Activated CD4-positive, alpha-beta T cell treated with anti-CD3 and anti-CD28 coated beads for 36 hours (primary cell): ENCODE measurements at regions of chr20 and their contacts with region 1.

Region 1: DNA sequence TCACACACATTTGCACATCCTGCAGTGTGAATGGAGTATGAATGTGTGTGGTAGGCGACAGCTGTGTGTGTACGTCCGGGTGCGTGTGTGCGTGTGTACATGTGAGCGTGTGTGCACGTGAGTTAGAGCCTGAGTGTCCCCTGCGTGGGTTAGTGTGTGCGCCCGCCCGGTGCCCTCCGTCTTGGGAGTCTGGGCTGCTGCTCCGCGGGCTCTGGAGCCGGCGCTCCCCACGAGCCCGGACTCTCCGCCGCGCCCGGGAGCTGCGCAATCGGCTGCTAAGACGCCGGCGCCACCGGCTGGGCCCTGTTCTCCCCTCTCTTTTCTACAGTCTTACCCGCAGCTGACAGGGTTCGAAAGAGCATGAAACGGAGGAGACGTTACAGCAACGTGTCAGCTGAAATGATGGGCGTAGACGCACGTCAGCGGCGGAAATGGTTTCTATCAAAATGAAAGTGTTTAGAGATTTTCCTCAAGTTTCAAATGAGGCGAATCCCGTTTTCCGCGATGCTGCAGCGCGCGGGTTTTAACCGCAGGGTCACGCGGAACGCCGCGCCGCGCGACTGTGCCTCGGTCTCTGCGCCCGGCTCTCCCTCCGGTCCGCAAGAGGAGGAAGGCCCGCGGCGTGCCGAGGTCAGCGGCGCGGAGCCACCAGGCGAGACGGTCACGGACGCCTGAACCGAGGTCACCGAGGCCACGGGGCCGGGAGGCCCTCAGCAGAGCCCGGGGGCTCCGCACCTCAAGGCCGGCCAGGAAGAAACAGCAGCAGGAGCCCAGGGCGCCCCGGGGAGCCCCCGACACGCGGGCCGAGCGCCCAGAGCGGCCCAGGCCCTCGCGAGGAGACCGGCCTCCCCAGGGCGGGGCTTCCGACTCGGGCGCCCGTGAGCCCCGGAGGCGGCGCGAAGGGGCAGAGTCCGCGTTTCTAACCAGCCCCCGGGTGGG is 95.3 kb upstream of the BHLHE23 start:
- DNase-seq: peak; percentile 85
- ATAC-seq: peak; percentile 74
- H3K4me3 Mint-ChIP-seq: peak overlapping the region; percentile 77
- H3K27ac Mint-ChIP-seq: peak overlapping the region; percentile 87
- H3K4me1 Mint-ChIP-seq: peaks cover 5% of the 10 kb centered on the region
- H3K27me3 Mint-ChIP-seq: no peaks in the 10 kb centered on the region

Region 2: DNA sequence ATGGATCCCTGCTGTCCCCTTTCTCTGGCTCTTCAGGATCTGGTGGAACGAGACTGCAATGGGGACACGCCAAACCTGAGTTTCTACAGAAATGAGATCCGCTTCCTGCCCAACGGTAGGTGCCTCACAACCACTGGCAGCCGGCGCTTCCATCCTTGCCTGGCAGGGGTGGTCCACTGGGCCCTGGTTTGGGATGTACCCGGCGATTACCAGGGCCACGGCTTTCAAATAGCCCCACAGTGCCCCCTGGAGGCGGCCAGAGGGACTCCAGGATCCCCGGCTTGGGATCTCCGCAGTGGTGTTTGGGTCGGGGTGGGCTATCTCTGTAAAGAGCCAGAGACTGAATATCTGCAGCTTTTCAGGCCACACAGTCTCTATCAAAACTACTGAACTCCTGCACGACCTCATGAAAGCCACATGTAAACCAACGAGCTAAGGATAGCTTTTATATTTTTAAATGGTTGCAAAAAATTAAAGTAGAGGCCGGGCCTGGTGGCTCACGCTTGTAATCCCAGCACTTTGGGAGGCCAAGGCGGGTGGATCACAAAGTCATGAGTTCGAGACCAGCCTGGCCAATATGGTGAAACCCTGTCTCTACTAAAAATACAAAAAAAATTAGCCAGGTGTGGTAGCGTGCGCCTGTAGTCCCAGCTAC is 293.7 kb before region 1 on chr20:
- CTCF ChIA-PET with region 1: no interaction called
- POLR2A ChIA-PET with region 1: no interaction called
- intact Hi-C with region 1: no loop called
- DNase-seq: peak; percentile 86
- ATAC-seq: peak; percentile 67
- H3K4me3 Mint-ChIP-seq: no peak overlapping the region
- H3K27ac Mint-ChIP-seq: no peak overlapping the region
- H3K4me1 Mint-ChIP-seq: peaks cover 21% of the 10 kb centered on the region
- H3K27me3 Mint-ChIP-seq: no peaks in the 10 kb centered on the region

Region 3: DNA sequence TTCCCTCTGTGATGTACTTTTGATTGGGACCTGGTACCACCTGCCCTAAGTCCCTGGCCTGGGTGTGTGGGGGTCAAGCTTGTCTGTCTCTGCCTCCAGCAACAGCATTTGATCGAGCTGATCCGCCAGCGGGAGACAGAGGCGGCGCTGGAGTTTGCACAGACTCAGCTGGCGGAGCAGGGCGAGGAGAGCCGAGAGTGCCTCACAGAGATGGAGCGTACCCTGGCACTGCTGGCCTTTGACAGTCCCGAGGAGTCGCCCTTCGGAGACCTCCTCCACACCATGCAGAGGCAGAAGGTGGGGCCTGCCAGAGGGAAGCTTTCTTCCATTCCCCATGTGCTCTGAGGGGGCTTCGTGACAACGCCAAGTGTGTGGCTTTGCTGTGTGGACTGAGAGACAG is 158.7 kb before region 1 on chr20:
- CTCF ChIA-PET with region 1: no interaction called
- POLR2A ChIA-PET with region 1: no interaction called
- intact Hi-C with region 1: no loop called
- DNase-seq: no peak
- ATAC-seq: no peak
- H3K4me3 Mint-ChIP-seq: no peak overlapping the region
- H3K27ac Mint-ChIP-seq: no peak overlapping the region
- H3K4me1 Mint-ChIP-seq: peaks cover 31% of the 10 kb centered on the region
- H3K27me3 Mint-ChIP-seq: no peaks in the 10 kb centered on the region

Region 4: DNA sequence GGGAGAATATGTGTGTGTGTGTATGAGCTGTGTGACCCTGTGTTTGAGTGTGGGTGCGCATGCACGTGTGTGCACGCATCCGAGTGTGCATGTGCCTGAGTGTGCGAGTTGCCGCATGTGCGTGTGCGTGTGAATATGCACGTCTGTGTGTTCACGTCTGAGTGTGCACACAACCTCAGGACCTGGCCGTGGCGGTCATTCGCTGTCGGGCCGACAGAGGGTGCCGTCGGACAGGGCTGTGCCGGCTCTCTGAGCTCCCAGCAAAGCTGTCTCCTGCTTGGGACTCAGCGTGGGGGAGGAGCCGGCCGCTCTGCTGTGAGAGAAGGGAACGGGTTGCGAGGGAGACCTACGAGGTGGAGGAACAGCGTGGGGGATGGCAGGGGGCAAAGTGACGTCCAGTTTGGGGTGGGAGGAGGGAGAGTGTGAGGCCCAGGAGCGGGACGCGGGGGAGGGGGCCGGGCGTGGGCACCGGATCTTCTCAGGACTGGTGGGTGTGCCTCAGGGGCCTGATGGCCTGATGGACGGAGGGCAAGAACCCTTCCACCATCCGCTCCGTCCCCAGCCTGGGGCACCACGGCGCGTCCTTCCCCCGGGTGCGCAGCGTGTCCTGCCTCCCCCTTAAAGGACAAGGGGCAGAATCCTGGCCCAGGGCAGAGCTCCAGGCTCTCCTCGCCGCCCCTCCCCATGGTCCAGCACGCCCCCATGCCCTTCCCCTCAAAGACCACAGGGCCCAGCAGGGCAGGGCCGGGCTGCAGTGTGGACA is 129.6 kb before region 1 on chr20:
- CTCF ChIA-PET with region 1: interaction called, 3 read pairs
- POLR2A ChIA-PET with region 1: no interaction called
- intact Hi-C with region 1: loop called in 1 of 2 experiments (anchors 1 kb)
- DNase-seq: peak; percentile 93
- ATAC-seq: peak; percentile 99
- H3K4me3 Mint-ChIP-seq: peak overlapping the region; percentile 4
- H3K27ac Mint-ChIP-seq: no peak overlapping the region
- H3K4me1 Mint-ChIP-seq: peaks cover 19% of the 10 kb centered on the region
- H3K27me3 Mint-ChIP-seq: peaks cover 37% of the 10 kb centered on the region

Region 5: GRCh38 chr20:63056236-63056948 is 45.7 kb before region 1 on chr20:
- CTCF ChIA-PET with region 1: interaction called, 3 read pairs
- POLR2A ChIA-PET with region 1: no interaction called
- intact Hi-C with region 1: loop called in 1 of 2 experiments (anchors 2 kb)
- DNase-seq: peak; percentile 71
- ATAC-seq: peak; percentile 71
- H3K4me3 Mint-ChIP-seq: no peak overlapping the region
- H3K27ac Mint-ChIP-seq: no peak overlapping the region
- H3K4me1 Mint-ChIP-seq: no peaks in the 10 kb centered on the region
- H3K27me3 Mint-ChIP-seq: peaks cover 16% of the 10 kb centered on the region

Region 6: DNA sequence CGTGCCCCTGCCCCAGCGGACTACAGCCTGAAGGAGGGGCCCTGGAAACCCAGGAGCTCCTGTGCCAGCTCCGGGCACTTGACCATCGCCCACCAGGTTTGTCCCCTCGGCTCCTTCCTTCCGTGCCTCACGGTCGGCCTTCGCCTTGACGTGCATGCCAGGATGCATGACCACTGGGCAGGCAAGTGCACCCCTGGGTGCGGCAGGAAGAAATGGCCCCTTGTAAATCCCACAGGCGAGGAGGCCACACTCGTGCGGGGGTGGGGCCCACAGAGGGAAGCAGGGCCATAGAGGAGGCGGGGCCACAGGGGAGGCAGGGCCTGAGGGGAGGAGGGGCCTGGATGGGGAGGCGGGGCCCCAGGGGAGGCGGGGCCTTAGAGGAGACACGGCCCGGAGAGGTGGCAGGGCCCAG is 32.2 kb after region 1 on chr20:
- CTCF ChIA-PET with region 1: no interaction called
- POLR2A ChIA-PET with region 1: no interaction called
- intact Hi-C with region 1: loop called in 1 of 2 experiments (anchors 2 kb)
- DNase-seq: peak; percentile 50
- ATAC-seq: peak; percentile 18
- H3K4me3 Mint-ChIP-seq: no peak overlapping the region
- H3K27ac Mint-ChIP-seq: no peak overlapping the region
- H3K4me1 Mint-ChIP-seq: no peaks in the 10 kb centered on the region
- H3K27me3 Mint-ChIP-seq: peaks cover 12% of the 10 kb centered on the region

Region 7: GRCh38 chr20:63216041-63216848 is 114.2 kb after region 1 on chr20 and contains the start of gene YTHDF1:
- CTCF ChIA-PET with region 1: no interaction called
- POLR2A ChIA-PET with region 1: no interaction called
- intact Hi-C with region 1: loop called in 1 of 2 experiments (anchors 1 kb)
- DNase-seq: peak; percentile 98
- ATAC-seq: peak; percentile 98
- H3K4me3 Mint-ChIP-seq: peak within 1 kb of the TSS; percentile 92
- H3K27ac Mint-ChIP-seq: peak within 1 kb of the TSS; percentile 88
- H3K4me1 Mint-ChIP-seq: peaks cover 43% of the 10 kb centered on the region
- H3K27me3 Mint-ChIP-seq: peaks cover 4% of the 10 kb centered on the region
- total RNA-seq, gene YTHDF1: 32.2 to 32.6 TPM

Region 8: GRCh38 chr20:63230800-63231268 is 128.8 kb after region 1 on chr20:
- CTCF ChIA-PET with region 1: no interaction called
- POLR2A ChIA-PET with region 1: no interaction called
- intact Hi-C with region 1: no loop called
- DNase-seq: peak; percentile 42
- ATAC-seq: peak; percentile 33
- H3K4me3 Mint-ChIP-seq: no peak overlapping the region
- H3K27ac Mint-ChIP-seq: no peak overlapping the region
- H3K4me1 Mint-ChIP-seq: peaks cover 2% of the 10 kb centered on the region
- H3K27me3 Mint-ChIP-seq: peaks cover 16% of the 10 kb centered on the region